Left lung (tissue), 14 donors: ENCODE measurements at regions of chr9 and their contacts with region 1.

Region 1: GRCh38 chr9:129900263-129901027 is 65.2 kb downstream of the USP20 start:
- DNase-seq: no peak
- ATAC-seq: no peak
- H3K4me3 ChIP-seq: no peak overlapping the region
- H3K27ac ChIP-seq: no peak overlapping the region
- H3K4me1 ChIP-seq: peaks cover 0 to 17% of the 10 kb centered on the region in 2 donors
- H3K27me3 ChIP-seq: no peaks in the 10 kb centered on the region
- CTCF ChIP-seq: no peak

Region 2: DNA sequence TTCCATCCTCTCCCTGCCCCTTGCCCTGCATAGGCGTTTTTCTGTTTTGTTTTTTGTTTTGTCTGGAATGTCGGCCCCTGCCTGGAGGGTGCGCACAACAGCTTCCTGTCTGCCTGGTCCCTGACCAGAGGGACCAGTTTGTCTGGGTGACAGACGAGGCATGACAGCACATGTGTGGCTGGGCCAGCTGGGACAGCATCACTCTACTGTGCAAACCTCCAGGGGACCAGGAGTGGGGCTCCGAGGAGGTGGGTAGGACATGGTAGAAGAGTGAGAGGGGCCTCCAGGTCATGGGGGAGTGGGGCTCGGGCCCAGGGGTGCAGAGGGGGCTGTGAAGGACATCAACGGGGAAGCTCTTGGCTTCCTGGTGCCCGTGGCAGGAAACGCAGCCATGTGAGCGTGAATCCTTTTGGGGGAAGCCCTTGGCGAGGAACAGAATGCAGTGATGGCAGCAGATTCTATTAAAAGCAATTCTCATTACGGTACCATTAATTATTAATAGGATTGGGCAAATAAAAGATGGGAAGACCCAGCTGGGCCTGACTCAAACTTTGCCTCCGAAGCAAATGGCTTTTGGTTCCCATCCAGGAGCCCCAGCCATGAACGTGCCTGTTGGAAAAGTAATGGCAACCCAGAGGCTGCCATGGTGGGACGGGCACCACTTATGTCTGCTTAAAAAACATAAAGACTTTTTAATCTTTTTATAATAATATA is 538.0 kb before region 1 on chr9:
- intact Hi-C with region 1: no loop called
- DNase-seq: peak in 1 of 4 donors; percentile 41
- ATAC-seq: no peak
- H3K4me3 ChIP-seq: no peak overlapping the region
- H3K27ac ChIP-seq: no peak overlapping the region
- H3K4me1 ChIP-seq: no peaks in the 10 kb centered on the region
- H3K27me3 ChIP-seq: no peaks in the 10 kb centered on the region
- CTCF ChIP-seq: no peak

Region 3: GRCh38 chr9:129954868-129955550 is 54.6 kb after region 1 on chr9:
- intact Hi-C with region 1: loop called in 1 of 2 experiments (anchors 10 kb)
- DNase-seq: no peak
- ATAC-seq: peak; percentile 76
- H3K4me3 ChIP-seq: no peak overlapping the region
- H3K27ac ChIP-seq: peak overlapping the region; percentile 42 to 83
- H3K4me1 ChIP-seq: peaks cover 8 to 30% of the 10 kb centered on the region in 2 donors
- H3K27me3 ChIP-seq: no peaks in the 10 kb centered on the region
- CTCF ChIP-seq: no peak